ENCODE measurements at regions of chr16 and their contacts with region 1.

Region 1: GRCh38 chr16:68704232-68704867 is 32.7 kb upstream of the CDH1 start:
- DNase-seq: peak; percentile 92
- H3K4me3 Mint-ChIP-seq: no peak overlapping the region
- H3K27ac Mint-ChIP-seq: no peak overlapping the region
- H3K4me1 Mint-ChIP-seq: peaks cover 20% of the 10 kb centered on the region
- H3K27me3 Mint-ChIP-seq: no peaks in the 10 kb centered on the region
- CTCF ChIP-seq: peak; percentile 81

Region 2: DNA sequence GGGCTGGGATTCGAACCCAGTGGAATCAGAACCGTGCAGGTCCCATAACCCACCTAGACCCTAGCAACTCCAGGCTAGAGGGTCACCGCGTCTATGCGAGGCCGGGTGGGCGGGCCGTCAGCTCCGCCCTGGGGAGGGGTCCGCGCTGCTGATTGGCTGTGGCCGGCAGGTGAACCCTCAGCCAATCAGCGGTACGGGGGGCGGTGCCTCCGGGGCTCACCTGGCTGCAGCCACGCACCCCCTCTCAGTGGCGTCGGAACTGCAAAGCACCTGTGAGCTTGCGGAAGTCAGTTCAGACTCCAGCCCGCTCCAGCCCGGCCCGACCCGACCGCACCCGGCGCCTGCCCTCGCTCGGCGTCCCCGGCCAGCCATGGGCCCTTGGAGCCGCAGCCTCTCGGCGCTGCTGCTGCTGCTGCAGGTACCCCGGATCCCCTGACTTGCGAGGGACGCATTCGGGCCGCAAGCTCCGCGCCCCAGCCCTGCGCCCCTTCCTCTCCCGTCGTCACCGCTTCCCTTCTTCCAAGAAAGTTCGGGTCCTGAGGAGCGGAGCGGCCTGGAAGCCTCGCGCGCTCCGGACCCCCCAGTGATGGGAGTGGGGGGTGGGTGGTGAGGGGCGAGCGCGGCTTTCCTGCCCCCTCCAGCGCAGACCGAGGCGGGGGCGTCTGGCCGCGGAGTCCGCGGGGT is 32.8 kb after region 1 on chr16 and contains the start of gene CDH1:
- CTCF ChIA-PET with region 1: interaction called, 5 read pairs
- POLR2A ChIA-PET with region 1: interaction called, 36 read pairs
- intact Hi-C with region 1: loop called (anchors 1 kb)
- DNase-seq: peak; percentile 84
- H3K4me3 Mint-ChIP-seq: peak within 1 kb of the TSS; percentile 79
- H3K27ac Mint-ChIP-seq: peak within 1 kb of the TSS; percentile 69
- H3K4me1 Mint-ChIP-seq: peaks cover 27% of the 10 kb centered on the region
- H3K27me3 Mint-ChIP-seq: no peaks in the 10 kb centered on the region
- CTCF ChIP-seq: no peak
- total RNA-seq, gene CDH1: 37.6 and 37.7 TPM in 2 replicates

Region 3: DNA sequence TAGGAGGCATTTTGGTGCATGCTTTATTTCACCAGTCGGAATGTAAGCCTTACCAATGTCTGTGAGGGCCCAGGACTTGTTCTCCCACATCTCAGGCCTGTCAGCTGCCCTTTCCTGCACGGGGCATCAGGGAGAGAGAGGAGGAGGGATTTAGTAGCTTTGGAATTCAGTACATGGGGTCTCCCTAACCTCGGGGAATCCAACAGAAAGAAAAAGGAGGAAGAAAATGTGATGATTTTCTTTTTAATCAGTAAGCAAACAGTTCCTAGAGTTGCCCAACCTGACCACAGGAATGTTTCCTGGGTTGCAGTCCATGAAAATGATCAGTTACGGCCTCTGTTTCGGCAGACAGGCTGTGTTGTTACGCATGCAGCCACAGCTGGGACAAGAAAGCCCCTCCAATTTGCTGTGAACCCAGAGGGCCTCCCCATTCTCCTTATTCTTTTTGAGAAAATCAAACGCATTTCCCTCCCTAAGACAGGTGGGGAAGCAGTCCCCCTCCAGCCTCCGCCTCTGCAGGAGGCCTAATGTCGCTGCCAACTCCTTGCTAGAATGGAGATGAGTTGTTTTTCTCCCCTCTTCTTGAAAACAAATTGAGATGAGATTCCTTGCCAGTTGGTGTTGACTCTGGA is 85.9 kb after region 1 on chr16:
- CTCF ChIA-PET with region 1: no interaction called
- POLR2A ChIA-PET with region 1: no interaction called
- intact Hi-C with region 1: no loop called
- DNase-seq: peak; percentile 78
- H3K4me3 Mint-ChIP-seq: no peak overlapping the region
- H3K27ac Mint-ChIP-seq: peak overlapping the region; percentile 65
- H3K4me1 Mint-ChIP-seq: peaks cover 16% of the 10 kb centered on the region
- H3K27me3 Mint-ChIP-seq: no peaks in the 10 kb centered on the region
- CTCF ChIP-seq: no peak

Region 4: DNA sequence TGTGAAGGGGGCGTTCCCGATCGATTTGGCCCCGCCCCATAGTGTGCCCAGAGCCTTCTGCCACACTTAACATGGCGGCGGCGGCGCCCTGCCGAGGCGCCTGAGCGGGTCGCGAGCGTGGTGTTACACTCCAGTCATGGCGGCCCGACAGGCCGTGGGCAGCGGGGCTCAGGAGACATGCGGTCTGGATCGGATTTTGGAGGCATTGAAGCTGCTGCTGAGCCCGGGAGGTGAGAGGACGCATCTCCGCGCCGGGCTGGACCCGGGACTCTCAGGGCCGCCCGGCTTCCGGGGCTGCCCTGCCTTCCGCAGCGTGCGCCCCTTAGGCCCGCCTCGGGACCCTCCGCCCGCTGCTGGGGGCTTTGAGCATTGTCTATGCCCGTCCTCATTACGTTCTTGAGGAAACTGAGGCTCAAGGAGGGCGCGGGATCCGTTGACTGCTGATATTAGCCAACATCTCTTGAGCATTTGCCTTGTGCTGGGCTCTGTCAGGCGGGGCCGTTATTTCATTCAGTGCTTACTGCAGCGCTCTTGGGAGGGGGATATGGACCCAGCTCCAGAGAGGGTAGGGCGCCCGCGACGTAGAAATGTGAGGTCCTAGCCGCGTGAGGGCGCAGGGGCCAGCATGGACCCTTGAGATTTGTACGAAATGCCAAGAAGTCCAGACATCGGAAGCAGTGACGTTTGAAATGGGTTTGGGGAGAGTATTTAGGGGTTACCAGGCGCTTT is 139.3 kb after region 1 on chr16 and contains the start of gene TANGO6:
- CTCF ChIA-PET with region 1: interaction called, 3 read pairs
- POLR2A ChIA-PET with region 1: interaction called, 3 read pairs
- intact Hi-C with region 1: loop called (anchors 1 kb)
- DNase-seq: peak; percentile 79
- H3K4me3 Mint-ChIP-seq: peak within 1 kb of the TSS; percentile 82
- H3K27ac Mint-ChIP-seq: peak within 1 kb of the TSS; percentile 82
- H3K4me1 Mint-ChIP-seq: peaks cover 10% of the 10 kb centered on the region
- H3K27me3 Mint-ChIP-seq: no peaks in the 10 kb centered on the region
- CTCF ChIP-seq: no peak
- total RNA-seq, gene TANGO6: 14.6 and 21.8 TPM in 2 replicates

Measured in MCF 10A (cell line).